ENCODE measurements at regions of chr12 and their contacts with region 1.

Region 1: DNA sequence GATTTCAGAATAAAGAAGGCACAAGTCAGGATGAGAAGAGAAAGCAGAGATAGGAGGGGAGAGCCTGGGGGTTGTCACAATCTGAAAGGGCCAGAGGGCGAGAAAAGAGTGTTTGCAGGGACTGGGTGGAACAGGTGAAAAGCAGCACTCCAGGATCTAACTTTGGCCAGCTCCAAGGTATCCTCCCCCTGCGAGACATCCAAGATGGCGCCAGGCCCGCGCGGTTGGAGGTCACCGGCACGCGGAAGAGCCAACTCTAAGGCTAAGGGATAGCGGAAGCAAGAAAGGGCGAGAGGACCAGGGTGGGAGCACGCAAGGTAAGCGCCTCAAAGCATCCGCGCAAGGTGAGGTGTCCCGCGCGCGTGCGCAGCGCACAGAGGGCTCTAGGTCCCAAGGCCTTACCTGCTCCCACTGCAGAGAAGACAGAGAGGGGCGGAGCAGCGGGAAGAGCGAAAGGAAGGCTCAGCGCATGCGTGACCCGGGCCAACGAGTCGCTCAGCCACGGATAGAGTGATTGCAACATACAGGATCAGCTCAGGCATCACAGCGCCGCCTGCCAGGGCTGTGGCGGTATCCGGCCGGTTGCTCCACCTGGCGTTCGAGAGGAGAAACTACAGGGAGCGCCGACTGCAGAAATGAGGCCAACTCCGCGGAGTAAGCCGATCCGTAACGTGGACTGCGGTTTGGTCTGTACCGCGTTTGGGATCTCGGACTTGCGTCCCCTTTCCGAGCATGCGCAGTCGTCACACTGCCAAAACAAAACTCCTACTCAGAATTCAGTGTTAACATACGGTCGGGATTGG is at the start of gene ATP5MC2:
- DNase-seq: peak; percentile 96 to 98 (median 97)
- H3K4me3 ChIP-seq: peak within 1 kb of the TSS; percentile 90
- H3K27ac ChIP-seq: peak within 1 kb of the TSS; percentile 88 to 95
- H3K4me1 ChIP-seq: peaks cover 11% of the 10 kb centered on the region
- H3K27me3 ChIP-seq: no peaks in the 10 kb centered on the region
- CTCF ChIP-seq: peak; percentile 99 to 100 (median 100)
- EP300 ChIP-seq: no peak
- POLR2A ChIP-seq: peak; percentile 40
- total RNA-seq, gene ATP5MC2: 241 to 345 (median 289) TPM

Region 2: GRCh38 chr12:53465679-53466078 is 210.2 kb before region 1 on chr12:
- intact Hi-C with region 1: no loop called
- DNase-seq: no peak
- H3K4me3 ChIP-seq: no peak overlapping the region
- H3K27ac ChIP-seq: no peak overlapping the region
- H3K4me1 ChIP-seq: no peaks in the 10 kb centered on the region
- H3K27me3 ChIP-seq: no peaks in the 10 kb centered on the region
- CTCF ChIP-seq: no peak
- EP300 ChIP-seq: no peak
- POLR2A ChIP-seq: no peak

Region 3: DNA sequence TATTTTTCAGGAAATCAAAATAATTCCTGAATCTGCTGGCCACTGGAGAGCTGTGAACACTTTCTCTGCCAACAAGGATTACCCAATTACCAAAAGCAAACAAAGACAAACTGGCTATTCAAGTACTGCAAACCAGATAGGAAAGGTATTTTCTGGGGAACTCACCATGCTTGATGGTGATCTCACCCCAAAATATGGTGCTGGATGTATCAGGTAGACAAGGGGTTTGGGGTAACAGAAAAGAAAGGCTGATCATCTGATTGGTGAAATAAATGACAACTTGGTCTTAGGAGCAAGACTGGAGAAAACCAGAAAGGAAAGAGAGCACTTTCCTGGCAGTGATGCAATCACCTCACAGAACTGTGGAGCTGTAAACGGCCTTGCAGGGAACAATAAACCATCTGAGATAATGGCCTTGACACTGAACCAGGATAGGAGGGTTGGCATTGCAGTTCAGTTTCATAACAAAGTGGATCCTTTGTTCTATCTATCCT is 137.6 kb before region 1 on chr12:
- intact Hi-C with region 1: loop called (anchors 1 to 5 kb)
- DNase-seq: peak in 2 of 5 donors; percentile 51 to 63
- H3K4me3 ChIP-seq: no peak overlapping the region
- H3K27ac ChIP-seq: peak overlapping the region in 1 of 2 donors; percentile 72
- H3K4me1 ChIP-seq: peaks cover 6% of the 10 kb centered on the region
- H3K27me3 ChIP-seq: no peaks in the 10 kb centered on the region
- CTCF ChIP-seq: no peak
- EP300 ChIP-seq: no peak
- POLR2A ChIP-seq: no peak

Region 4: GRCh38 chr12:53543539-53543938 is 132.3 kb before region 1 on chr12:
- intact Hi-C with region 1: loop called (anchors 1 to 5 kb)
- DNase-seq: peak; percentile 53 to 66 (median 61)
- H3K4me3 ChIP-seq: no peak overlapping the region
- H3K27ac ChIP-seq: peak overlapping the region in 1 of 2 donors; percentile 59
- H3K4me1 ChIP-seq: peaks cover 5% of the 10 kb centered on the region
- H3K27me3 ChIP-seq: no peaks in the 10 kb centered on the region
- CTCF ChIP-seq: peak; percentile 50 to 93 (median 81)
- EP300 ChIP-seq: no peak
- POLR2A ChIP-seq: no peak

Region 5: GRCh38 chr12:53625946-53626701 is 49.7 kb before region 1 on chr12 and contains the start of gene ATF7:
- intact Hi-C with region 1: loop called in 2 of 4 experiments (anchors 5 to 10 kb)
- DNase-seq: peak; percentile 98 to 100 (median 99)
- H3K4me3 ChIP-seq: peak within 1 kb of the TSS; percentile 74
- H3K27ac ChIP-seq: peak within 1 kb of the TSS; percentile 63 to 93
- H3K4me1 ChIP-seq: peaks cover 6% of the 10 kb centered on the region
- H3K27me3 ChIP-seq: no peaks in the 10 kb centered on the region
- CTCF ChIP-seq: peak in 1 of 3 donors; percentile 24
- EP300 ChIP-seq: no peak
- POLR2A ChIP-seq: peak; percentile 79
- total RNA-seq, gene ATF7: 19.8 to 60.8 (median 41.3) TPM